SK-N-SH (cell line): ENCODE measurements at regions of chr3 and their contacts with region 1.

Region 1: GRCh38 chr3:51955893-51956770 is 951 bp downstream of the GPR62 start:
- DNase-seq: peak; percentile 91
- H3K4me3 ChIP-seq: no peak overlapping the region; a peak in 1 of 4 replicates
- H3K27ac ChIP-seq: peak overlapping the region in 1 of 2 experiments; percentile 53; a peak in 2 of 4 replicates
- H3K4me1 ChIP-seq: peaks cover 4 to 12% of the 10 kb centered on the region in 2 experiments; a peak in 2 of 4 replicates
- H3K27me3 ChIP-seq: no peaks in the 10 kb centered on the region
- CTCF ChIP-seq: peak; percentile 47
- EP300 ChIP-seq: no peak
- RAD21 ChIP-seq: no peak

Region 2: GRCh38 chr3:51941798-51942602 is 14.1 kb before region 1 on chr3 and contains the starts of genes PARP3 and RRP9:
- CTCF ChIA-PET with region 1: interaction called, 44 read pairs
- POLR2A ChIA-PET with region 1: interaction called, 3 read pairs
- DNase-seq: peak; percentile 99
- H3K4me3 ChIP-seq: peak within 1 kb of the TSS; percentile 85 to 95
- H3K27ac ChIP-seq: peak within 1 kb of the TSS; percentile 85 to 97
- H3K4me1 ChIP-seq: peaks cover 11 to 18% of the 10 kb centered on the region in 2 experiments; a peak in 3 of 4 replicates
- H3K27me3 ChIP-seq: no peaks in the 10 kb centered on the region
- CTCF ChIP-seq: peak; percentile 98
- EP300 ChIP-seq: no peak; a peak in 1 of 4 replicates
- RAD21 ChIP-seq: peak; percentile 98
- polyA plus RNA-seq, gene PARP3: 31.1 and 35.2 TPM in 2 replicates
- polyA plus RNA-seq, gene RRP9: 49.6 and 52.0 TPM in 2 replicates

Region 3: GRCh38 chr3:51967384-51968169 is 11.4 kb after region 1 on chr3 and contains the start of gene PCBP4:
- CTCF ChIA-PET with region 1: interaction called, 84 read pairs
- POLR2A ChIA-PET with region 1: interaction called, 4 read pairs
- DNase-seq: peak; percentile 88
- H3K4me3 ChIP-seq: peak within 1 kb of the TSS; percentile 76 to 79
- H3K27ac ChIP-seq: peak within 1 kb of the TSS; percentile 54 to 97
- H3K4me1 ChIP-seq: peaks cover 4 to 67% of the 10 kb centered on the region in 2 experiments; a peak in 2 of 4 replicates
- H3K27me3 ChIP-seq: no peaks in the 10 kb centered on the region
- CTCF ChIP-seq: no peak
- EP300 ChIP-seq: no peak
- RAD21 ChIP-seq: no peak
- polyA plus RNA-seq, gene PCBP4: 97.4 and 118 TPM in 2 replicates

Region 4: DNA sequence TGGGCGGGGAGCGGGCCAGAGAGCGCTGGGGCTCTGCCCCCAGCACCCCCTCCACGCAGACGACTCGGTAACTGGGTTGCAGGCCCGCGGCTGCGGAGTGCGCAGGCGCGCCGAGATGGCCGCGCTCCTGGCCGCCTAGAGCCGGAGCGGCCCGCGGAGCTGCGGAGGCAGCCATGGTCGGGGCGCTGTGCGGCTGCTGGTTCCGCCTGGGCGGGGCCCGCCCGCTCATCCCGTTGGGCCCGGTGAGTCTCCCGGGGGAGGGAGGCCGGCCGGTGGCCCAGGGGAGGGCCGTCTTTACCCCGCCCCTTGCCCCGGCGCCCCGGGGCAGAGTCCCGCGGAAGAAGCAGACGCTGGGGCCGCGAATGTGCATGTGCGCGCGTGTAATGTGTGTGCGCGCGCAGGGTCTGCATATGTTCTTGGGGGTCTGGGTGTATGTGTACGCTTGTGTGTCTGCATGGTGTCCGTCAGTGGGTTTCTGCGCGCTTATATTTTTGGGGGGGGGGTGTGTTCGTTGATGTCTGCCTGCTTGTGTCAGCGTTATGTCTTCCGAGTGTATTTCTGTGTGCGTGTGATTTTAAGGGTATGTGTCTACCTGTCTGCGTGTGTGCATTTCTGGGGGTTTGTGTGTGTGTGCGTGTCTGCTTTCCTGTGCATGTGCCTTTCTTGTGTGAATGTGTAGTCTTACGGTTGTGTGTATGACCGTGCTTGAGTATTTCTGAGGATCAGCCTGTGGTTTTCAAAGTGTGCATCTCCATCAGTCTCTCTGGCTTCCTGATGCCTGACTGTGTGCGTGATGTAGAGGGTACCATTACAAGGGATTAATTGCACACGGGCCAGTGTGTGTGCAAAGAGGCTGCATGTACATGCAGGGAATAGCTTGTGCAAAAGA is 19.1 kb after region 1 on chr3 and contains the start of gene ABHD14A:
- CTCF ChIA-PET with region 1: interaction called, 84 read pairs
- POLR2A ChIA-PET with region 1: interaction called, 7 read pairs
- DNase-seq: peak; percentile 92
- H3K4me3 ChIP-seq: peak within 1 kb of the TSS; percentile 53 to 85
- H3K27ac ChIP-seq: peak within 1 kb of the TSS; percentile 63 to 90; a peak in 3 of 4 replicates
- H3K4me1 ChIP-seq: peaks cover 7 to 31% of the 10 kb centered on the region in 2 experiments
- H3K27me3 ChIP-seq: no peaks in the 10 kb centered on the region
- CTCF ChIP-seq: no peak
- EP300 ChIP-seq: no peak
- RAD21 ChIP-seq: no peak
- polyA plus RNA-seq, gene ABHD14A: 22.1 and 31.5 TPM in 2 replicates

Region 5: GRCh38 chr3:51982782-51983577 is 26.8 kb after region 1 on chr3 and contains the start of gene ACY1:
- CTCF ChIA-PET with region 1: interaction called, 14 read pairs
- POLR2A ChIA-PET with region 1: no interaction called
- DNase-seq: peak; percentile 97
- H3K4me3 ChIP-seq: peak within 1 kb of the TSS; percentile 68 to 90
- H3K27ac ChIP-seq: peak within 1 kb of the TSS; percentile 89 to 93
- H3K4me1 ChIP-seq: peaks cover 5 to 19% of the 10 kb centered on the region in 2 experiments; a peak in 3 of 4 replicates
- H3K27me3 ChIP-seq: no peaks in the 10 kb centered on the region
- CTCF ChIP-seq: peak; percentile 4; the same call in 1 of the 2 replicates
- EP300 ChIP-seq: no peak
- RAD21 ChIP-seq: no peak
- polyA plus RNA-seq, gene ACY1: 93.0 and 96.2 TPM in 2 replicates